Breast epithelium (tissue), 4 donors: ENCODE measurements at regions of chr14 and their contacts with region 1.

Region 1: GRCh38 chr14:87264272-87265195 is 728.4 kb downstream of the GALC start:
- DNase-seq: no peak
- H3K4me3 ChIP-seq: no peak overlapping the region
- H3K27ac ChIP-seq: no peak overlapping the region
- H3K4me1 ChIP-seq: no peaks in the 10 kb centered on the region
- H3K27me3 ChIP-seq: no peaks in the 10 kb centered on the region
- CTCF ChIP-seq: no peak
- POLR2A ChIP-seq: no peak

Region 2: DNA sequence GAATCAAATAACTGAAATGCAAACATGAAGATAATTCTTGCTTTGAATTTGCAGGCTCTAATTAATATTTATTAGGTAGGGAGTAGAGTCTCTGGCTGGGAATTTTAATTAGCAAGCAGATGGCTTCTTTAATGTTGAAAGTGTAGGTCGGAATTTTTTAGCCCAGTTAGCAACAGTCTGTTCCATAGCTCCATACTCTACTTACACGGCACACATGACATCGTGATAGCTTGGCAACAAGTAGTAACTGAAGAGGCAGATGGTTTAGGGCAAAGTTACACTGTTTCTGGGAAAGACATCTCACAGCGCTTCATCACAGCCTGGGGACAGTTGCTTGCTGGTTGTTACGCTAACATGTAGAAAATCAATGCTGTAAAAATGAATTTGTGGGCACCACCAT is 17.7 kb after region 1 on chr14:
- intact Hi-C with region 1: loop called (anchors 1 kb)
- DNase-seq: no peak
- H3K4me3 ChIP-seq: no peak overlapping the region
- H3K27ac ChIP-seq: no peak overlapping the region
- H3K4me1 ChIP-seq: no peaks in the 10 kb centered on the region
- H3K27me3 ChIP-seq: no peaks in the 10 kb centered on the region
- CTCF ChIP-seq: no peak
- POLR2A ChIP-seq: no peak

Region 3: GRCh38 chr14:87579036-87579435 is 314.5 kb after region 1 on chr14:
- intact Hi-C with region 1: no loop called
- DNase-seq: no peak
- H3K4me3 ChIP-seq: no peak overlapping the region
- H3K27ac ChIP-seq: no peak overlapping the region
- H3K4me1 ChIP-seq: no peaks in the 10 kb centered on the region
- H3K27me3 ChIP-seq: no peaks in the 10 kb centered on the region
- CTCF ChIP-seq: no peak
- POLR2A ChIP-seq: no peak